Left cardiac atrium (tissue), 4 donors: ENCODE measurements at regions of chr16 and their contacts with region 1.

Region 1: DNA sequence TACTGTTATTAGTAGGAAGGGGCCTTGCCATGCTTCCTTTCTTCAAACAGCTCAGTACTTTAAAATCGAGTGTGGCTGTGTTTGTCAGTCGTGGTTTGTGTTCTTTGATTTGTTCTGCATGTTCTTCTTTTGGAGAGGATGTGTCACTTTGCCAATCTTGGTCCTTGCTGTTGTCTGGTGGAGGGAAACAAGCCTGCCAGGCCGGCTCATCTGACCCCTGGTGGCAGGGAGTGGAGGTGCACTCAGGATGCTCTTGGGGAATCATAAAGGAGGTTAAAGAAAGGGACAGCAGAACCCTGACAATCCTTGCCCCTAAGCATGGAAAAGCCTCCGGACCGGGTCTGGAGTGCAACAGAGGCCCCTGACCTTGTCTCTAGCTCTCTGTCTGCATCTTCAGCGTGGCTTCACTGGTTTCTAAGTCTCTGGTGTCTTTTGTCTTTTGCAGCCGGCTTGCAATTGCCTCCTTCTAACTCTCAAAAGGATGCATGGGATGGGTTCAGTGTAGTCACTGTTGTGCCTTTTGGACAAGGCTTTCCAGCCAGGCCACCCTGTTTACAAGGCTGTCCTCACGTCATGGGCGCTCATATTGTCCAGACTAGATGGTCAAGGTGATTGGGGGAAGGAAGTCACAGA is 135.8 kb downstream of the WWOX start:
- DNase-seq: peak; percentile 67
- ATAC-seq: peak; percentile 55 to 80

Region 2: DNA sequence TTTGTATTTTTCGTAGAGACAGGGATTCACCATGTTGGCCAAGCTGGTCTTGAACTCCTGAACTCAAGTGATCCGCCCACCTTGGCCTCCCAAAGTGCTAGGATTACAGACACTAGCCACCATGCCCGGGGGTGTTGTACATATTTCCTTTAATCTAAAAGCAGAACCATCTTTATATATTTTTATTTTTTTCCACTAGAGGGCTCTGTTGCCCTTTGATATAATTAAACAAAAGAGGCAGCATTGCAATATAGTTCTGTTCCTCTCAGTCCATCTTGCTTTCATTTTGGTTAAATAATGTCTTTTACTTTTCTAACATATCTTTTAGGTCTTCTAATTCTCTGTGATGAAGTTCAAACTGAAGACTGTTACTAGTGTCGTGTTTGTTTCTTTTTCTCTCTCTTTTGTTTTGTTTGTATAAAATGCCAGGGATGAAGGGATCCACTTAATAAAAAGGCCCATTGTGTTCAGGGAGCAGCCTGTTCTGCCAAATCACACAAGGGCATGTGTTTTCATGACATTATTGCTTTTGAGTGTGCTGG is 112.4 kb before region 1 on chr16:
- intact Hi-C with region 1: loop called in 1 of 2 experiments (anchors 5 kb)
- DNase-seq: no peak
- ATAC-seq: peak; percentile 68 to 84

Region 3: GRCh38 chr16:78184238-78185183 is 50.8 kb before region 1 on chr16:
- intact Hi-C with region 1: no loop called
- DNase-seq: no peak
- ATAC-seq: no peak